Kidney (tissue), 22 donors: ENCODE measurements at regions of chr4 and their contacts with region 1.

Region 1: GRCh38 chr4:149897783-149898182 is 82.1 kb upstream of the IQCM start:
- DNase-seq: peak in 2 of 5 donors; percentile 29 to 43
- H3K4me3 ChIP-seq: no peak overlapping the region
- H3K27ac ChIP-seq: no peak overlapping the region
- H3K4me1 ChIP-seq: no peaks in the 10 kb centered on the region
- H3K27me3 ChIP-seq: no peaks in the 10 kb centered on the region
- CTCF ChIP-seq: no peak

Region 2: GRCh38 chr4:149370785-149371420 is 526.9 kb before region 1 on chr4:
- intact Hi-C with region 1: loop called (anchors 10 kb)
- DNase-seq: peak in 2 of 5 donors; percentile 20 to 37
- H3K4me3 ChIP-seq: no peak overlapping the region
- H3K27ac ChIP-seq: no peak overlapping the region
- H3K4me1 ChIP-seq: no peaks in the 10 kb centered on the region
- H3K27me3 ChIP-seq: no peaks in the 10 kb centered on the region
- CTCF ChIP-seq: peak; percentile 38

Region 3: GRCh38 chr4:150126201-150126863 is 228.5 kb after region 1 on chr4:
- intact Hi-C with region 1: no loop called
- DNase-seq: no peak
- H3K4me3 ChIP-seq: no peak overlapping the region
- H3K27ac ChIP-seq: no peak overlapping the region
- H3K4me1 ChIP-seq: no peaks in the 10 kb centered on the region
- H3K27me3 ChIP-seq: no peaks in the 10 kb centered on the region
- CTCF ChIP-seq: no peak